A549 (cell line): ENCODE measurements at regions of chr1 and their contacts with region 1.

Region 1: GRCh38 chr1:221478050-221478949 is 263.6 kb downstream of the DUSP10 start:
- DNase-seq: peak; percentile 34 to 79
- ATAC-seq: peak; percentile 99 to 100
- H3K4me3 ChIP-seq: no peak overlapping the region
- H3K27ac ChIP-seq: peak overlapping the region; percentile 14 to 48; a peak in 4 of 6 replicates
- H3K4me1 ChIP-seq: peaks cover 11% of the 10 kb centered on the region
- CTCF ChIP-seq: peak; percentile 89
- EP300 ChIP-seq: no peak
- POLR2A ChIP-seq: no peak
- RAD21 ChIP-seq: peak; percentile 97

Region 2: DNA sequence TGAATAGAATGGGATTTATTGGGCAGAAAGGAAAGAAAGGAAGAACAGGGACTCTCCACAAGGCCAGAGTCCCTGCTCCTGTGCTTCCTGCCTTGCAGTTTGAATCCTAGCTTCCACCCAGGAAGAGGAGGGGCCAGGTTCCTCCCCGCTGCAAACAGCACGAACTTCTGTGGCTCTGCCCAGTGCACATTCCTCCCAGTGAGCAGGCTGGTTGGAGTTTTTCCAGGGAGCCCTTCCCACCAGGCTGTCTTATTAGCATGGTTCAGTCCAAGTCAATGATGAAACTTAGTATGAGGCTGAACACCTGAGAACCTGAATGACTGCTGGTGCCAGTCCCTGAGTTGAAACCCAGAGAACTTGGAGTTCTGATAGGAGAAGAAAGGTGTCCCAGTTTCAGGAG is 16.4 kb after region 1 on chr1:
- CTCF ChIA-PET with region 1: interaction called, 11 read pairs
- POLR2A ChIA-PET with region 1: no interaction called
- DNase-seq: peak in 1 of 2 experiments; percentile 13
- ATAC-seq: no peak
- H3K4me3 ChIP-seq: no peak overlapping the region
- H3K27ac ChIP-seq: no peak overlapping the region
- H3K4me1 ChIP-seq: 0 out of 3 replicates have a peak, but pooled peaks cover 3% of the 10 kb centered on the region
- CTCF ChIP-seq: no peak
- EP300 ChIP-seq: no peak
- POLR2A ChIP-seq: no peak
- RAD21 ChIP-seq: no peak

Region 3: DNA sequence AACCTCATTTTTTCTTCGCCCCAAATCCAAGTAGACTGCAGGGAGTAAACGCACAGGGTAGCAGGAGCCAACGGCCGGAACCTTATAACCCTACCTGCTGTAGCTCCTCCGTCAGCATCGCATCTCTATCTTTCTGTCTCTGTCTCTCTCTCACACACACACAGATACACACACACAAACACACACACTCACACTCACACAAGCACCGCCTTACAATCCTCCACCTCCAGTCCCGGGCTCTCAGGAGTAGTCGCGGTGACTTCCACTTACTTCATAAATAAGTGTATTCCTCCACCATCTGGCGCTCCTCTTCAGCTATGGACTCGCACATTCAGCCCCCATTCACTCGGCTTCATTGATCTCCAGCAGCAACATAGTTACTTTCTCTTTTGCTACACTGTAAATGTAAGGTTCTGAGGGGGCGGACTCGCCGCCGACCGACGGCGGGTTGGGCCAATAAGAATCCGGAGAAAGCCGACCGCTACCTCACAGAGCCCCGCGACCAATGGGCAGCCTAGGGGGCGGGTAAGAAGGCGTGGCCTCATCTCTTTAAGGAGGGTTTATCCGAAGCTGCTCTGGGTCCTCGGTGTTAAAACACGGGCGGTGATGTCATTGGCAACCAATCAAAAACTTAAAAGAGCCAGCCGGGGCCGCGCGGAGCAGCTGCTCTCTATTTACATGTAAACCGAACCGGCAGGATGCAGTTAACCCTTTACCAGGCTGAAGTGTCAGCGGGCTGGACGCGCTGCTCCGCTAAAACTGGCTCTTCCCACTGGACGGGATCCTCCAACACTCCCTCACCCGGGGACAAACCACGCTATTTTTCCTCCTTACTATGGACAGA is 263.6 kb after region 1 on chr1 and contains the start of gene DUSP10:
- CTCF ChIA-PET with region 1: interaction called, 9 read pairs
- POLR2A ChIA-PET with region 1: interaction called, 11 read pairs
- DNase-seq: peak; percentile 99
- ATAC-seq: peak; percentile 83 to 95
- H3K4me3 ChIP-seq: peak within 1 kb of the TSS; percentile 73
- H3K27ac ChIP-seq: peak within 1 kb of the TSS; percentile 93 to 97
- H3K4me1 ChIP-seq: peaks cover 9% of the 10 kb centered on the region; the same call in 1 of the 3 replicates
- CTCF ChIP-seq: no peak
- EP300 ChIP-seq: no peak
- POLR2A ChIP-seq: no peak; the same call in none of the 2 replicates
- RAD21 ChIP-seq: peak; percentile 13 to 19; a peak in 1 of 5 replicates
- polyA plus RNA-seq, gene DUSP10: 4.8 and 5.0 TPM in 2 replicates

Region 4: DNA sequence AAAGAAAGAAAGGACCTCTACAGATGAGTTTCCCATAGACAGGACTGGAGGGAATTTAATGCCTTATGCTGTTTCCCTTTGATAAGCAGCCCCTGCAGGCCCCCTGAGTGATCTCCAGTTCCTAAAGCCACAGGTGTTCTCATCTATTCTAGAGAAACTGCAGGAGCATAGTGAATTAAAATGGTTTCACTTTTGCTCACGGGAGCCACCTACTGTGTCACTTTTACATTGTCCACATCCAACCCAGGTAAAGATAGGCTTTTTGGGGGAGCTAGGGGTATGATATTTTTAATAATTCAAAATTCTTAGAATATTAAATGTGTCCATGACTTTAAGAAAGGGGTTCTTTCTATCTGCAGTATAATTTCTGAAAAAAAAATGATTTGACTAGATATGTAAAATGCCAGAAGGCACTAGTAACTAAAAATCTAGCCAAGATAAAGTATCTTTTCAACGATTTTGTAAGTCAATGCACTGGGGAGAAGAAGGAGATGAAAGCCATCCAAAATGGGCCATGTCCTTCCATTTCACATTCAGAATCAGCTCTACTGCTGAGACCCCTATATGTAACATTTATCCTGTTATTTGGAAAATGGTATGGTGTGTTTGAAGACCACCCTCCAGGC is 530.9 kb after region 1 on chr1:
- CTCF ChIA-PET with region 1: interaction called, 34 read pairs
- POLR2A ChIA-PET with region 1: no interaction called
- DNase-seq: peak; percentile 29 to 30
- ATAC-seq: peak; percentile 90 to 91
- H3K4me3 ChIP-seq: peak overlapping the region; percentile 33
- H3K27ac ChIP-seq: peak overlapping the region; percentile 26 to 55; a peak in 4 of 6 replicates
- H3K4me1 ChIP-seq: no peaks in the 10 kb centered on the region
- CTCF ChIP-seq: peak; percentile 68
- EP300 ChIP-seq: no peak
- POLR2A ChIP-seq: no peak
- RAD21 ChIP-seq: peak; percentile 69 to 79

Region 5: DNA sequence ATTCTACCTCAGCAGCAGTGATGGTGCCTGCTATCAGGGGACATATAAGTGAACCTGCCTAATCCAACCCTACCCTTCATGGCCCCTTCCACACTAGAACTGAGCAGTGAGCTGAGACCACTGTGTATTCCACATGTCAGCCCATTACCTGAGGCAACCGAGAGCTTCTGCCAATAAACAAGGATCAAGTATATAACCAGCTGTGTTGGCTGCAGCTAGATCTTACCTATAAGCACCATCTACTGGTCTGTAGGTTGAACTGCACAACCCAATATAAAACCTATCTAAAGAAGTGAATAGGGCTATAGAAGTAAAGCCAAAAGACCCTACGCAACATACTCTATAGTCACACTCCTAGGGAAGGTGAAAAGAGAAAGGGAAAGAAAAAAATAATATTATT is 692.7 kb after region 1 on chr1:
- CTCF ChIA-PET with region 1: interaction called, 11 read pairs
- POLR2A ChIA-PET with region 1: no interaction called
- DNase-seq: peak; percentile 17 to 40
- ATAC-seq: peak in 1 of 2 experiments; percentile 71; a peak in 4 of 6 replicates
- H3K4me3 ChIP-seq: no peak overlapping the region
- H3K27ac ChIP-seq: no peak overlapping the region
- H3K4me1 ChIP-seq: no peaks in the 10 kb centered on the region
- CTCF ChIP-seq: peak; percentile 40
- EP300 ChIP-seq: no peak
- POLR2A ChIP-seq: no peak
- RAD21 ChIP-seq: peak; percentile 56 to 69